CD4-positive, alpha-beta T cell (primary cell): ENCODE measurements at regions of chr14 and their contacts with region 1.

Region 1: GRCh38 chr14:38197001-38197783 is 10.5 kb upstream of the SSTR1 start:
- DNase-seq: peak in 3 of 14 experiments; percentile 28 to 44 (median 42)
- ATAC-seq: no peak
- H3K4me3 ChIP-seq: no peak overlapping the region
- H3K4me3 Mint-ChIP-seq: no peak overlapping the region
- H3K27ac ChIP-seq: no peak overlapping the region
- H3K27ac Mint-ChIP-seq: no peak overlapping the region
- H3K4me1 ChIP-seq: peaks cover 3% of the 10 kb centered on the region
- H3K4me1 Mint-ChIP-seq: peaks cover 5% of the 10 kb centered on the region
- H3K27me3 ChIP-seq: no peaks in the 10 kb centered on the region
- H3K27me3 Mint-ChIP-seq: no peaks in the 10 kb centered on the region
- CTCF ChIP-seq: peak; percentile 58

Region 2: DNA sequence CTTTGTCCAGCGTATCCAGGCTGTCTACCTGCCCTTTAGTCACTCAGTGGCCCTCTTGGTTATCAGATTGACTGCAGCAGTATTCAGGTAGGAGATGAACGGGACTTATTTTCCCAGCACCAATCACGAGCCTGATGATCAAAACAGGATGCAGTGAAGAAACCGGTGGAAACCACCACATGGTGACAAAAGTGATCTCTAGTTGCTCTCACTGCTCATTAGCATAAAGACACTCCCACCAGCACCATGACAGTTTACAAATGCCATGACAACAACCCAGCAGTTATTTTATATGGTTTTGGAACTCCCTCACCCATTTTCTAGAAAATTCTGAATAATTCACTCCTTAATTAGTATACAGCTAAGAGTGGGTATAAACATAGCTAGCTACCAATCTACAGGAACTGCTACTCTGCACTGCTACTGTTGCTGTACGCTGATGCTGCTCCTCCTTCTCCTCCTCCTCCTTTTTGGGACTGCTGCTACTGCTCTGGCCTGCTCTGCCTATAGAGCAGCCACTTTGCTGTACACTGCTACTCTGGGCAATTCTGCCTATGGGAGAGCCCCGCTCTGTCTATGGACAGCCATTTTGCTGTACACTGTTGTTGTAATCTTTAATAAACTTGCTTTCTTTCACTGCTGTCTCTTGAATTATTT is 132.0 kb before region 1 on chr14:
- CTCF ChIA-PET with region 1: no interaction called
- POLR2A ChIA-PET with region 1: no interaction called
- intact Hi-C with region 1: loop called in 1 of 2 experiments (anchors 10 kb)
- DNase-seq: peak in 13 of 14 experiments; percentile 28 to 97 (median 47)
- ATAC-seq: peak; percentile 96
- H3K4me3 ChIP-seq: peak overlapping the region; percentile 30
- H3K4me3 Mint-ChIP-seq: peak overlapping the region; percentile 61
- H3K27ac ChIP-seq: peak overlapping the region; percentile 89 to 94
- H3K27ac Mint-ChIP-seq: peak overlapping the region; percentile 93
- H3K4me1 ChIP-seq: peaks cover 24% of the 10 kb centered on the region
- H3K4me1 Mint-ChIP-seq: peaks cover 34% of the 10 kb centered on the region
- H3K27me3 ChIP-seq: no peaks in the 10 kb centered on the region
- H3K27me3 Mint-ChIP-seq: no peaks in the 10 kb centered on the region
- CTCF ChIP-seq: no peak

Region 3: GRCh38 chr14:38143659-38144505 is 53.3 kb before region 1 on chr14:
- CTCF ChIA-PET with region 1: no interaction called
- POLR2A ChIA-PET with region 1: no interaction called
- intact Hi-C with region 1: no loop called
- DNase-seq: no peak
- ATAC-seq: no peak
- H3K4me3 ChIP-seq: no peak overlapping the region
- H3K4me3 Mint-ChIP-seq: no peak overlapping the region
- H3K27ac ChIP-seq: no peak overlapping the region
- H3K27ac Mint-ChIP-seq: no peak overlapping the region
- H3K4me1 ChIP-seq: no peaks in the 10 kb centered on the region
- H3K4me1 Mint-ChIP-seq: no peaks in the 10 kb centered on the region
- H3K27me3 ChIP-seq: no peaks in the 10 kb centered on the region
- H3K27me3 Mint-ChIP-seq: no peaks in the 10 kb centered on the region
- CTCF ChIP-seq: no peak